ENCODE measurements at regions of chr1 and their contacts with region 1.

Region 1: GRCh38 chr1:206912445-206913095 is 9.2 kb downstream of the FCMR start:
- DNase-seq: no peak
- ATAC-seq: peak; percentile 43
- H3K4me3 Mint-ChIP-seq: no peak overlapping the region
- H3K27ac Mint-ChIP-seq: no peak overlapping the region
- H3K4me1 Mint-ChIP-seq: peaks cover 57% of the 10 kb centered on the region
- H3K27me3 Mint-ChIP-seq: no peaks in the 10 kb centered on the region

Region 2: DNA sequence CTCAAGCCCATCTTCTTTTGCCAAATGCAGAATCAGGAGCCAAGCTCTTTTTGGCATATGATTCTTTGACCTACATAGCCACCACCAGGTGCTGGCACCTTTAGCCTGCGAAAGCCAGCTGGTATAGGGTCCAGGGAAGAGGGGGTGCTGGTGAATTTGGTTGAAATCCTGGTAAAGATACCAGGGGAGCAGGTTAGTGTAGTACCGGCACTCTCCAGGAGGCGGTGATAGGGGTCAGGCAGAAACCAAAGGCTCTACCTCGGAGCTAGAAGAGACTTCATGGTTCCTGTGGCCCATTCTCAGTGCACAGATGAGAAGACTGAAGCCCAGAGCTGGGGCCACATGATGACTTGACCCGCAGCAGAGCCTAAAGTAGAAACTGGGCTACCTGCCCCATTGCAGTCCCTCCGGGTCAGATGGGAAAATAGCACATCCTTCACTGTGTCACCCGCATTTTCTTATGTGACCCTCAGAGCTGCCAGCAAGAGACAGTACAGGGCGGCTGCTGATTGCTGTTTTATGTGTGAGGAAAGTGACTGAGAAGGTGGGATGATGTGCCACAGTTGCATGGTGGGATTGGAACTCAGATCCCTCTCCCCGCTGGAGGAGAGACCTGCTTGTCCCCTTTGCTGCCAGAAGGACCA is 177.9 kb before region 1 on chr1:
- POLR2A ChIA-PET with region 1: interaction called, 10 read pairs
- DNase-seq: peak; percentile 79
- ATAC-seq: peak; percentile 35
- H3K4me3 Mint-ChIP-seq: no peak overlapping the region
- H3K27ac Mint-ChIP-seq: no peak overlapping the region
- H3K4me1 Mint-ChIP-seq: peaks cover 46% of the 10 kb centered on the region
- H3K27me3 Mint-ChIP-seq: no peaks in the 10 kb centered on the region

Region 3: GRCh38 chr1:206878456-206878855 is 34.1 kb before region 1 on chr1:
- POLR2A ChIA-PET with region 1: no interaction called
- DNase-seq: no peak
- ATAC-seq: no peak
- H3K4me3 Mint-ChIP-seq: no peak overlapping the region
- H3K27ac Mint-ChIP-seq: no peak overlapping the region
- H3K4me1 Mint-ChIP-seq: no peaks in the 10 kb centered on the region
- H3K27me3 Mint-ChIP-seq: no peaks in the 10 kb centered on the region

Region 4: GRCh38 chr1:206925106-206925736 is 12.7 kb after region 1 on chr1:
- POLR2A ChIA-PET with region 1: interaction called, 21 read pairs
- DNase-seq: peak; percentile 63
- ATAC-seq: peak; percentile 60
- H3K4me3 Mint-ChIP-seq: no peak overlapping the region
- H3K27ac Mint-ChIP-seq: no peak overlapping the region
- H3K4me1 Mint-ChIP-seq: peaks cover 24% of the 10 kb centered on the region
- H3K27me3 Mint-ChIP-seq: no peaks in the 10 kb centered on the region

Measured in activated naive CD8-positive, alpha-beta T cell treated with anti-CD3 and anti-CD28 coated beads, Interleukin-2, amount 10 ng/mL, durations not matched to agents 7 days and 5 days (primary cell).